Panc1 (cell line): ENCODE measurements at regions of chr20 and their contacts with region 1.

Region 1: DNA sequence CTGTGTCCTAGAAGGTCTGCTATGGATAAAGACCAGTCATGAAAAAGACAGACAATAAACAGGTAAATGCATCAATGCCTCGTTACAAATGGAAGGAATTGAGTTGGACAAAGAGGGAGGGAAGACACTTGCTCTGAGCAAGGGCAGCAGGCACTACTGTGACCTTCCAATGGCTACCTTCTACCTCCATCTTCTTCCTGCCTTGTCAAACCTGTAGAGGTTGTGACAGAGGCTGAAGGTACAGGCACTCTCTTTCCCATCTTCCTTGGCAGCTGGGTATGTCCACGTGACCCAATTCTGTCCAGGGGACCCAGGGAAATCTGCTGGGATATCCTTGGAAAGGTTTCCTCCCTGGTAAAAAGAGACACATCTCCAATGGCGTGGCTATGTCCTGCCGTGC is 274.8 kb downstream of the TFAP2C start:
- DNase-seq: no peak
- ATAC-seq: no peak
- H3K4me3 ChIP-seq: no peak overlapping the region
- H3K27ac ChIP-seq: no peak overlapping the region
- H3K4me1 ChIP-seq: no peaks in the 10 kb centered on the region
- H3K27me3 ChIP-seq: no peaks in the 10 kb centered on the region
- CTCF ChIP-seq: no peak

Region 2: GRCh38 chr20:56629670-56630478 is 274.0 kb before region 1 on chr20:
- CTCF ChIA-PET with region 1: no interaction called
- POLR2A ChIA-PET with region 1: no interaction called
- in situ Hi-C with region 1: no loop called
- intact Hi-C with region 1: no loop called
- DNase-seq: no peak
- ATAC-seq: peak; percentile 77
- H3K4me3 ChIP-seq: peak overlapping the region; percentile 68 to 88
- H3K27ac ChIP-seq: peak overlapping the region; percentile 71
- H3K4me1 ChIP-seq: 0 out of 2 replicates have a peak, but pooled peaks cover 6% of the 10 kb centered on the region
- H3K27me3 ChIP-seq: no peaks in the 10 kb centered on the region
- CTCF ChIP-seq: peak; percentile 88

Region 3: GRCh38 chr20:57361212-57361915 is 457.5 kb after region 1 on chr20:
- CTCF ChIA-PET with region 1: no interaction called
- POLR2A ChIA-PET with region 1: interaction called, 10 read pairs
- in situ Hi-C with region 1: no loop called
- intact Hi-C with region 1: no loop called
- DNase-seq: no peak
- ATAC-seq: no peak
- H3K4me3 ChIP-seq: no peak overlapping the region
- H3K27ac ChIP-seq: no peak overlapping the region
- H3K4me1 ChIP-seq: no peaks in the 10 kb centered on the region
- H3K27me3 ChIP-seq: no peaks in the 10 kb centered on the region
- CTCF ChIP-seq: no peak

Region 4: DNA sequence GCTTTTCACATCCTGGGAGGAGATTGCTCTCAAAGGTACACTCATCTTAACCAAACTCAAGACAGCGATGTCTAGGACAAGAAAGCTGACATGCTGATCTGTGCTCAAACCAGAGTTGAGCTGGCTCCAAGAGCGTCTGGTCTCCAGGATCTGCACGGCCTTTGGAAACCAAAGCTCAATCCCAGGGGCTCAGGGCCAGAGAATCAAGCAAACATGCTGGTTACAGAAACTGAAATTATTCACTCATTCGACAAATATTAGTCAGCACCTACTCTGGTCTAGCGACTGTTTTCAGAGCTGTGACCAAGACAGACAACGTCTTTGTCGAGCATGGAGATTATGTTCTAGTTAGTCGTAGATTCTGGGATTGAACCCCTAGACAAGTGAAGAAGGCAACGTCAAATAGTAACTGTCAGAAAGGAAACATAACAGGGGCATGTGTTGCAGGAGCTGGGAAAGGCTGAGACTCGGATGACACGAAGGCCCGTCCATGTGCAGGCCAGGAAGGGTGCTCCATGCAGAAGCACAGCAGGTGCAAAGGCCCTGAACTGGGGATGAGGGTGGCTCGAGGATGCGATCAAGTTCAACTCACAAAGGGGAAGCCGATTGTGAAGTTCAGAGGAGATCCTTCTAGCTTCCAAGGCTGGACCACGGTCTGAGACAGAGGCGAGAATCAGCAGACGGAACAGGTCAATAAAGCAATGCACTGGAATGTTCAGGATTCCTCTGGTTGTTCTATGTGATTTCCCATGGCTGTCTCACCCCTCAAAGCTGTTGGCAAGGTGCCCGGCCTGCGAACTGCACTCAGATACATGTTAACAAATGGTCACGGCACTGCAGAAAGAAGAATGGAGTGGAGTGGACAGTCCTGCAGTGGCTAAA is 644.6 kb after region 1 on chr20:
- CTCF ChIA-PET with region 1: no interaction called
- POLR2A ChIA-PET with region 1: no interaction called
- in situ Hi-C with region 1: no loop called
- intact Hi-C with region 1: no loop called
- DNase-seq: no peak
- ATAC-seq: no peak
- H3K4me3 ChIP-seq: no peak overlapping the region
- H3K27ac ChIP-seq: no peak overlapping the region
- H3K4me1 ChIP-seq: no peaks in the 10 kb centered on the region
- H3K27me3 ChIP-seq: peaks cover 14% of the 10 kb centered on the region
- CTCF ChIP-seq: no peak